ENCODE measurements at regions of chr3 and their contacts with region 1.

Region 1: DNA sequence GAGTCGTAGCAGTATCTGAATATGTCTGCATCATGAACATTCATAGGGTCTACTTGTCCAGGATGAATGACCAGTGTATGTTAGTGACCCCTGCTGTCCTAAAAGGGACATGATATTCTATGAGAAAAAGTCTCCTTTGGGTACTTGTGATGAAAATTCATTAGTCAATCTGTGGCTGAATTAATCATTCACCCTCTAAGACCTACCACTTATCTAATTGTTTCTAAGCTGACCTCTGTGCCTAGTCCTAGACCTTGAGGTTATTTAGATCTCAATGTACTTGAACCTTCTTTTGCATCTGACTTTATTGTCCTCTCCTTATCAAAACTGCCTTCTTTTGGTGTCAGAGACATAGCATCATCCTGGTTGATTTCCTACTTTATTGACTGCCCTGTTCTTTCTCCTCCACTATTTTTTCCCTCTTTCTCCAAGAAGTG is 799.3 kb downstream of the DIPK2A start:
- DNase-seq: no peak
- ATAC-seq: no peak
- H3K4me3 Mint-ChIP-seq: no peak overlapping the region
- H3K27ac Mint-ChIP-seq: no peak overlapping the region
- H3K4me1 Mint-ChIP-seq: no peaks in the 10 kb centered on the region
- H3K27me3 Mint-ChIP-seq: no peaks in the 10 kb centered on the region
- CTCF ChIP-seq: no peak

Region 2: DNA sequence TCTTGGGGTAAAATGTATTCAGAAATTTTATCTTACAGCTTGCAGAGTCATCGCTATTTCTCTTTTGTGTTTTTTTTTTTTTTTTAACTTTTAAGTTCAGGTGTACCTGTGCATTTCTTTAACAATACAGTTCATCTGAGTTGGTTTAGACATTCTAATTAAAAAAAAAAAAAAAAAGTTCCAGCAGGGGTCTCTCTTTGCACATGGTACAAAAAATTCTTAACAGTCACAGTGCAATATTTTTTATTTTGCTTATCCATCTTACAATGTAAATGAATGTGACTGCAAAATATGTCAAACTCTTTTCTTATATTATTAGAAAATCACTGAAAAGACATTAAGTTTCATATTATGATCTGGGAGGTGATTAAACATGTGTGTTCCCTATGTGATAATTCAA is 875.1 kb before region 1 on chr3:
- CTCF ChIA-PET with region 1: no interaction called
- POLR2A ChIA-PET with region 1: no interaction called
- intact Hi-C with region 1: loop called (anchors 2 kb)
- DNase-seq: no peak
- ATAC-seq: no peak
- H3K4me3 Mint-ChIP-seq: no peak overlapping the region
- H3K27ac Mint-ChIP-seq: no peak overlapping the region
- H3K4me1 Mint-ChIP-seq: no peaks in the 10 kb centered on the region
- H3K27me3 Mint-ChIP-seq: peaks cover 1% of the 10 kb centered on the region
- CTCF ChIP-seq: peak; percentile 56

Measured in activated B cell treated with CpG ODN at 0.5 μM for 24 hours (primary cell).